HCT116 (cell line): ENCODE measurements at regions of chr10 and their contacts with region 1.

Region 1: DNA sequence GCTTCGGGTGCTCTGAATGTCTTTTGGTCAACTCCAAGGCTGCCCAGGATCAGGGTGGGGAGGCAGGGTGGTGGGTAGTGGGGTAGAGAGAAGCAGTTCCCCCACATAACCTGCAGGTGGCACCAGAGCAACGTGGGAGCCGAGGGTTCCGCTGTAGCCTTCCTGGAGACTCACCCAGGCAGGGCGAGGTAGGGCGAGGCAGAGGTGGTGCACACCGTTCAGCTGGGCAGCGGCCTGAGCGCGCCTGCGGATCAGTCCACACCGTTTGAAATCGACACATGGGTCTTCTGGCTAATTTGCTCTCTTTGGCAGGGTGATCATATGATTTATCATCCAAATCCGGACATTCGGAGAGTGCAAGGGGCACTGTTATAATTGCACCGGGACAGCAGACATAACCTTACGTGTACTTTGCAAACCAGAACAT is 41.4 kb upstream of the MAP3K8 start:
- DNase-seq: peak; percentile 57
- ATAC-seq: peak; percentile 95
- H3K4me3 ChIP-seq: no peak overlapping the region
- H3K27ac ChIP-seq: no peak overlapping the region
- H3K4me1 ChIP-seq: peaks cover 6 to 19% of the 10 kb centered on the region in 2 experiments
- H3K27me3 ChIP-seq: no peaks in the 10 kb centered on the region
- CTCF ChIP-seq: peak; percentile 83 to 92 (median 88)
- POLR2A ChIP-seq: no peak
- RAD21 ChIP-seq: peak; percentile 94

Region 2: GRCh38 chr10:30114871-30115625 is 277.5 kb before region 1 on chr10:
- CTCF ChIA-PET with region 1: no interaction called
- POLR2A ChIA-PET with region 1: no interaction called
- RAD21 ChIA-PET with region 1: no interaction called
- intact Hi-C with region 1: no loop called
- DNase-seq: no peak
- ATAC-seq: no peak
- H3K4me3 ChIP-seq: no peak overlapping the region
- H3K27ac ChIP-seq: no peak overlapping the region
- H3K4me1 ChIP-seq: no peaks in the 10 kb centered on the region
- H3K27me3 ChIP-seq: no peaks in the 10 kb centered on the region
- CTCF ChIP-seq: no peak
- POLR2A ChIP-seq: no peak
- RAD21 ChIP-seq: no peak

Region 3: GRCh38 chr10:30374353-30374752 is 18.2 kb before region 1 on chr10:
- CTCF ChIA-PET with region 1: no interaction called
- POLR2A ChIA-PET with region 1: no interaction called
- RAD21 ChIA-PET with region 1: no interaction called
- intact Hi-C with region 1: no loop called
- DNase-seq: no peak
- ATAC-seq: peak; percentile 84
- H3K4me3 ChIP-seq: no peak overlapping the region
- H3K27ac ChIP-seq: no peak overlapping the region
- H3K4me1 ChIP-seq: no peaks in the 10 kb centered on the region
- H3K27me3 ChIP-seq: no peaks in the 10 kb centered on the region
- CTCF ChIP-seq: no peak
- POLR2A ChIP-seq: no peak
- RAD21 ChIP-seq: no peak

Region 4: GRCh38 chr10:30534465-30535144 is 142.0 kb after region 1 on chr10:
- CTCF ChIA-PET with region 1: interaction called, 3 read pairs
- POLR2A ChIA-PET with region 1: no interaction called
- RAD21 ChIA-PET with region 1: no interaction called
- intact Hi-C with region 1: loop called (anchors 5 kb)
- DNase-seq: peak; percentile 64
- ATAC-seq: peak; percentile 90
- H3K4me3 ChIP-seq: no peak overlapping the region
- H3K27ac ChIP-seq: no peak overlapping the region
- H3K4me1 ChIP-seq: peaks cover 0 to 14% of the 10 kb centered on the region in 2 experiments; a peak in 2 of 4 replicates
- H3K27me3 ChIP-seq: no peaks in the 10 kb centered on the region
- CTCF ChIP-seq: peak; percentile 73 to 85 (median 75)
- POLR2A ChIP-seq: no peak
- RAD21 ChIP-seq: peak; percentile 91

Region 5: GRCh38 chr10:30591249-30591670 is 198.7 kb after region 1 on chr10:
- CTCF ChIA-PET with region 1: interaction called, 31 read pairs
- POLR2A ChIA-PET with region 1: no interaction called
- RAD21 ChIA-PET with region 1: interaction called, 10 to 13 read pairs
- intact Hi-C with region 1: loop called (anchors 2 kb)
- DNase-seq: peak; percentile 37
- ATAC-seq: peak; percentile 97
- H3K4me3 ChIP-seq: no peak overlapping the region
- H3K27ac ChIP-seq: no peak overlapping the region
- H3K4me1 ChIP-seq: 0 out of 4 replicates have a peak, but pooled peaks cover 0 to 2% of the 10 kb centered on the region in 2 experiments
- H3K27me3 ChIP-seq: no peaks in the 10 kb centered on the region
- CTCF ChIP-seq: peak; percentile 69 to 76 (median 75)
- POLR2A ChIP-seq: no peak
- RAD21 ChIP-seq: peak; percentile 76

Region 6: GRCh38 chr10:30639946-30640786 is 247.6 kb after region 1 on chr10:
- CTCF ChIA-PET with region 1: interaction called, 6 read pairs
- POLR2A ChIA-PET with region 1: no interaction called
- RAD21 ChIA-PET with region 1: no interaction called
- intact Hi-C with region 1: loop called (anchors 5 kb)
- DNase-seq: peak; percentile 61
- ATAC-seq: peak; percentile 40; the same call in 1 of the 2 replicates
- H3K4me3 ChIP-seq: no peak overlapping the region
- H3K27ac ChIP-seq: no peak overlapping the region
- H3K4me1 ChIP-seq: peaks cover 0 to 12% of the 10 kb centered on the region in 2 experiments; a peak in 3 of 4 replicates
- H3K27me3 ChIP-seq: no peaks in the 10 kb centered on the region
- CTCF ChIP-seq: peak; percentile 59 to 84 (median 81); a peak in 5 of 6 replicates
- POLR2A ChIP-seq: no peak
- RAD21 ChIP-seq: peak; percentile 57